A673 (cell line): ENCODE measurements at regions of chr20 and their contacts with region 1.

Region 1: DNA sequence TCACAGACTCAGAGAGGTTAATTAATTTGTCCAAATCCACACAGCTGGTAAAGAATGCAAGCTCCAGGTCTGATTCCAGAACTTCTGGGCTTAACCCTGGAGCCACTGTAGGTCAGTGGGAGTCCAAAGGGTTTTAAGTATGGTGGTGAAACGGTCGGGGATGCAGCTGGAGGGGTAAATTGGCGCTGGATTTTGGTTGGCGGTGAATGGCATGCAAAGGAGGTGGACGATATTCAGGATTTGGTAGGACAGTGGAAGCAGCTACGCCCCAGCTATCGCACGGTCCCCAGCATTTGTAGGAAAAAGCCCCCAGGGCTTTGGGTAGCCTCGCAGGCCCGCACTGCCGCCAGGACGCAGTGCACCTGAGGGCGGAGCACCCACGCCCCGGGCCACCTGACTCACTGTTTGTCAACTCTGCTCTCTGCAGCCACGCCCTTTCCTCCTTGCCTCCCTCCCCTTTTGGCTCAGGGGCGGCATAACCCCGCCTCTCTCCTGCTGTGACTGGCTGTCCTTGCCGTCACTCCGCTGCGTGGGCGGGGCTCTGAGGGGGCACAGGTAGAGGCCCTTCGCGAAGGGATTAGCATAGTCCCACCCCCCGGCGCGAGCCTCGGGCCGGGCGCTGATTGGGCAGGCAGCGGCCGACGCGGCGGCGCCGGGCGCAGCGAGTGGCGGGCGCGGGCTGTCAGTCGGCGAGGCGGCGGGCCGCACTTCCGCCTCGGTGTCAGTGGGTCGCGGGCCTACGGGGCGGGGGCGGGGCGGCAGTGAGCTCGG is at the start of gene OSBPL2:
- DNase-seq: peak; percentile 99
- H3K4me3 ChIP-seq: peak within 1 kb of the TSS; percentile 73
- H3K27ac ChIP-seq: peak within 1 kb of the TSS; percentile 63
- H3K4me1 ChIP-seq: no peaks in the 10 kb centered on the region
- H3K27me3 ChIP-seq: no peaks in the 10 kb centered on the region
- CTCF ChIP-seq: no peak
- total RNA-seq, gene OSBPL2: 26.3 and 32.1 TPM in 2 replicates

Region 2: GRCh38 chr20:62258499-62259293 is 20.7 kb after region 1 on chr20:
- CTCF ChIA-PET with region 1: no interaction called
- POLR2A ChIA-PET with region 1: interaction called, 12 read pairs
- intact Hi-C with region 1: no loop called
- DNase-seq: no peak
- H3K4me3 ChIP-seq: no peak overlapping the region
- H3K27ac ChIP-seq: no peak overlapping the region
- H3K4me1 ChIP-seq: no peaks in the 10 kb centered on the region
- H3K27me3 ChIP-seq: no peaks in the 10 kb centered on the region
- CTCF ChIP-seq: no peak